MCF 10A (cell line): ENCODE measurements at regions of chr5 and their contacts with region 1.

Region 1: GRCh38 chr5:176647030-176647866 is at the start of gene TSPAN17:
- DNase-seq: peak; percentile 100
- H3K4me3 Mint-ChIP-seq: peak within 1 kb of the TSS; percentile 80
- H3K27ac Mint-ChIP-seq: peak within 1 kb of the TSS; percentile 76
- H3K4me1 Mint-ChIP-seq: peaks cover 21% of the 10 kb centered on the region
- H3K27me3 Mint-ChIP-seq: no peaks in the 10 kb centered on the region
- CTCF ChIP-seq: peak; percentile 49
- total RNA-seq, gene TSPAN17: 36.7 and 47.5 TPM in 2 replicates

Region 2: DNA sequence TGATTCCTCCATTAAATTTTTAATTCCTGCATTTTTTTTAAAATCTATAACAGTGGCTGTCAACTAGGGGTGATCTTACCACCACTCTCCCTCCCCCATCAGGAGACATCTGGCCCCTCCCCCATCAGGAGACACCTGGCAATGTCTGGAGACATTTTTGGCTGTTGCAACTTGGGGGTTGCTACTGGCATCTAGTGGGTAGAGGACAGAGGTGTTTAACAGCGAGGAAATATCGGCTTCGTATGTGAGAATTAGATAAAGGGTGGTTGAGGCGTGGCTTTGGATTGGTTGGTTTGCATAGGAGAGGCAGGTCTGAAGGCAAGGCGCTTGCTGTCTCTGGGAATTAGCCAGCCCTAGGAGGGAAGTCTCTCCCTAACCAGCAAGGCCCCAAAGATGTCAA is 87.6 kb before region 1 on chr5:
- CTCF ChIA-PET with region 1: no interaction called
- POLR2A ChIA-PET with region 1: no interaction called
- intact Hi-C with region 1: loop called (anchors 5 kb)
- DNase-seq: peak; percentile 57
- H3K4me3 Mint-ChIP-seq: no peak overlapping the region
- H3K27ac Mint-ChIP-seq: no peak overlapping the region
- H3K4me1 Mint-ChIP-seq: peaks cover 7% of the 10 kb centered on the region
- H3K27me3 Mint-ChIP-seq: no peaks in the 10 kb centered on the region
- CTCF ChIP-seq: peak; percentile 19

Region 3: DNA sequence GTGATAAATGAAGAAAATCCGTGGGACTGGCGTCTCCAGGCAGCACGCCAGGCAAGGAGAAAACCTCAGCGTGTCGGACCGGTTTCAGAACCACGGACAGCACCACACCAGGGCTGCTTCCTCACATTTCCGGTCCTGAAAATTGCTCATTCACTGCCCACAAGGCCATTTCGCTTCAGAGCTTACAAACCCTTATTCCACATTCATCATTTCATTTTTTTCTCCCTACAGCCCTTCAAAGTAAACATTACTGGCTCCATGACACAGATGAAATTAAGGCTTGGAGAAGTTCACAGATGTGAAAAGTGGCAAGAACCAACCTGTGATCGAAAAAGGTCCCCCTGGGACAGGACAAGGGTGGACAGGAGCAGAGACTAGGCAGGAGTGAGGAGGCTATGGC is 35.8 kb before region 1 on chr5:
- CTCF ChIA-PET with region 1: interaction called, 4 read pairs
- POLR2A ChIA-PET with region 1: interaction called, 8 read pairs
- intact Hi-C with region 1: loop called (anchors 1 kb)
- DNase-seq: peak; percentile 87
- H3K4me3 Mint-ChIP-seq: no peak overlapping the region
- H3K27ac Mint-ChIP-seq: no peak overlapping the region
- H3K4me1 Mint-ChIP-seq: peaks cover 36% of the 10 kb centered on the region
- H3K27me3 Mint-ChIP-seq: peaks cover 5% of the 10 kb centered on the region
- CTCF ChIP-seq: no peak